ENCODE measurements at regions of chr2 and their contacts with region 1.

Region 1: GRCh38 chr2:190880378-190881073 is at the start of gene GLS:
- DNase-seq: peak; percentile 90
- ATAC-seq: peak; percentile 82
- H3K4me3 Mint-ChIP-seq: peak within 1 kb of the TSS; percentile 97
- H3K27ac Mint-ChIP-seq: peak within 1 kb of the TSS; percentile 97
- H3K4me1 Mint-ChIP-seq: peaks cover 44% of the 10 kb centered on the region
- H3K27me3 Mint-ChIP-seq: no peaks in the 10 kb centered on the region
- CTCF ChIP-seq: no peak
- total RNA-seq, gene GLS: 212 and 255 TPM in 2 replicates

Region 2: DNA sequence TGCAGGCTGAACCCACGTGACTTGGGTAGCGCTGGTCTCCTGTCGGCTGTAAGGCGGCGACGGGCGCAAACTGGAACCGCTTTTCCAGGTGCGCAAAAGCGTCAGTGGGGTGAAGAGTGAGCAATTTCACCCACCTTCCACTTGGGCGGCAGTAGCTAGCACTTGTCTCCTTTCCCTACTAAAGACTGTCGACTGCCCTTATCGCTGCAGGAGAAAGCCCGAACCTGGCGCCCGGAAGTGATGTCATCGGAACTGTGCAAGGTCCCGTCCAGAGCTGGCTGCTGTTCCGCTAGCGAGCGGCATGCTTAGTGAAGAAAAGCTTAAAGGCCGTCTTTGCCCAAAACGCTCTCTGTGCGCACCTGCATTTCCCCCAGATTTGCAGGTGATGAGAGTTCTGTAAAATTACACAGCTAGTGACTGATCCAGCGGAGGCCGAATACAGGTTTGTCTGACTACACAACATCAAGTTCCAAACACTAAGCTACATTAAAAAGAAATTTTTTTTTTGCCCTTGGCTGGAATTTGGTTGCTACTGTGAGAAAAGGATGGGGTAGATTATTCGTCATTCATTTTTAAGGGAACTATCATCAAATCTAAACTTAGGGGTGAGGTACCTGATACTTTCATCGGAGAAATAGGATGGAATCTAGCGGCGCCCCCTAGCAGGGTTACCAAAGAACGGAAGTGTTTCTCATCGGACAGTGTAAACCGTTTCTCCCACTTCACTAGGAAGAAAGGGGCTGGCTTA is 1117.8 kb before region 1 on chr2 and contains the start of gene OSGEPL1:
- CTCF ChIA-PET with region 1: no interaction called
- POLR2A ChIA-PET with region 1: interaction called, 4 read pairs
- intact Hi-C with region 1: loop called (anchors 5 kb)
- DNase-seq: peak; percentile 81
- ATAC-seq: peak; percentile 93
- H3K4me3 Mint-ChIP-seq: peak within 1 kb of the TSS; percentile 95
- H3K27ac Mint-ChIP-seq: peak within 1 kb of the TSS; percentile 97
- H3K4me1 Mint-ChIP-seq: peaks cover 8% of the 10 kb centered on the region
- H3K27me3 Mint-ChIP-seq: no peaks in the 10 kb centered on the region
- CTCF ChIP-seq: no peak
- total RNA-seq, gene OSGEPL1: 10.6 and 12.3 TPM in 2 replicates

Region 3: GRCh38 chr2:190149908-190150307 is 730.6 kb before region 1 on chr2:
- CTCF ChIA-PET with region 1: no interaction called
- POLR2A ChIA-PET with region 1: no interaction called
- intact Hi-C with region 1: no loop called
- DNase-seq: no peak
- ATAC-seq: no peak
- H3K4me3 Mint-ChIP-seq: no peak overlapping the region
- H3K27ac Mint-ChIP-seq: no peak overlapping the region
- H3K4me1 Mint-ChIP-seq: no peaks in the 10 kb centered on the region
- H3K27me3 Mint-ChIP-seq: no peaks in the 10 kb centered on the region
- CTCF ChIP-seq: no peak

Region 4: DNA sequence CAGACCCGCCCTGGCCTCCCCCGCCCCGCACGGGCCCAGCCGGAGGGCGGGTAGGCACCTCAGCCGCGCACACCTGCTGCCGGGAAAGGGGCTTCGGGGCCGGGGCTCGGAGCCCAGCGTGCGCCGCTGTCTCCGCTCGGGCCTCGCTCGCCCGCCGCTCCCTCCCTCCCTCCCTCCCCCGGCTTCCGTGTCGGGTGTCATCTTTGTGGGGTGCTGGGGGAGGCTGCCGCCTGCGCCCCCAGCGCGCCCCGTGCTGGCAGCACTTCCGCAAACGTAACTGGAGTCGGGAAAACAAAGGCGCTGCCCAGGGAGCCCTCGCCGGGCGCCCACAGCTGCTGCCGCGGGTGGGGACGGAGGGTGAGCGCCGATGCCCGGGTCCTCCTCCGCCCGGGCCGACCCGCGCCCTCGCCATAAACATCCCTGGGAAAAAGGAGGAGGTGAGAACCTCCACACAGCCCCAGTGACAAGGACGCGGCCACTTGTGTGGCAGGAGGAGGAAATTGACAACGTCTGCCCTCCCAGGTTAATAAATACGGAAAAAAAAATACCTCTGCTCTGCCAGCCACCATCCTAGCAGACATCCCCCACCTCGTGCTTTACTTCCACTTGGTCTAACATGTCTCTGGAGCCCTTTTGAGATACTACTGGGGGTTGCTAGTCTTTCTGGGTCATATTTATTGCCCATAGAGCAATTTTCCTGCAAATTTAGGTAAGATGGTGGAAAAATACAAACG is 471.8 kb before region 1 on chr2:
- CTCF ChIA-PET with region 1: no interaction called
- POLR2A ChIA-PET with region 1: interaction called, 3 read pairs
- intact Hi-C with region 1: loop called (anchors 5 kb)
- DNase-seq: no peak
- ATAC-seq: peak; percentile 55
- H3K4me3 Mint-ChIP-seq: peak overlapping the region; percentile 84
- H3K27ac Mint-ChIP-seq: peak overlapping the region; percentile 86
- H3K4me1 Mint-ChIP-seq: peaks cover 26% of the 10 kb centered on the region
- H3K27me3 Mint-ChIP-seq: no peaks in the 10 kb centered on the region
- CTCF ChIP-seq: no peak

Region 5: DNA sequence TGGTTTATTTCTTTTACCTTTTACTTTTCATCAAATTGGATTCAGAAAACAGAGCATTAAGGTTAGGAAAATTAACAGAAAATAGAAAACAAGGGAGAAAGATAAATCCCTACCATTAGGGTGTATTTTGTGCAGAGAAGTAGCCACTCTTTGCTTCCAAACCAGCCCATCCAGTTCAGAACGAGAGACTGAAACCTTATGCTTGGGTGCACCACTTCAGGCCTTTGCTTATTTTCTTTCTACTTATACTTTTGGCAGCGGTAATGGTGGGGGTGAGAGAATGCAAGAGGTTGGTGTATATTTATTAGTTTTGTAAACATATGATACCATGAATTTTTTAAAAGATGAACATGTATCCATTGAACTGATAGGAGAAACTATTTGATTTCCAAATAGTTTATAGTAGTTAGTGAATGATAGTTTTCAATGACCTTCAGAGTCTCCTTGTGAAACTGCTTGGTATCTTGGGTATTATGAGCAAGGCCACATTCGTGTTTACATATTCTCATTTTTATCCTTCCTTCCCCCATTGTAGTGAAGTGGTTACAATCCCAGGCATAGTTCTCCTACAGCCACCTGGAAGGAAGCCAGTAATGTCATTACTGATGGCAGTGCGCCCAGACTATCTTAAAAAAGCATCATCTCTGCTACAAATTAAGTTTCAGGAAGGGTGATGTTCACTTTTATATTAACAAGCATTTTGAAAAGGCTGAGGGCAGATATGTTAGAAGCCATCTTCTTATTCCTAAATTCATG is 411.5 kb before region 1 on chr2:
- CTCF ChIA-PET with region 1: no interaction called
- POLR2A ChIA-PET with region 1: no interaction called
- intact Hi-C with region 1: no loop called
- DNase-seq: no peak
- ATAC-seq: no peak
- H3K4me3 Mint-ChIP-seq: no peak overlapping the region
- H3K27ac Mint-ChIP-seq: no peak overlapping the region
- H3K4me1 Mint-ChIP-seq: peaks cover 55% of the 10 kb centered on the region
- H3K27me3 Mint-ChIP-seq: no peaks in the 10 kb centered on the region
- CTCF ChIP-seq: no peak

Region 6: DNA sequence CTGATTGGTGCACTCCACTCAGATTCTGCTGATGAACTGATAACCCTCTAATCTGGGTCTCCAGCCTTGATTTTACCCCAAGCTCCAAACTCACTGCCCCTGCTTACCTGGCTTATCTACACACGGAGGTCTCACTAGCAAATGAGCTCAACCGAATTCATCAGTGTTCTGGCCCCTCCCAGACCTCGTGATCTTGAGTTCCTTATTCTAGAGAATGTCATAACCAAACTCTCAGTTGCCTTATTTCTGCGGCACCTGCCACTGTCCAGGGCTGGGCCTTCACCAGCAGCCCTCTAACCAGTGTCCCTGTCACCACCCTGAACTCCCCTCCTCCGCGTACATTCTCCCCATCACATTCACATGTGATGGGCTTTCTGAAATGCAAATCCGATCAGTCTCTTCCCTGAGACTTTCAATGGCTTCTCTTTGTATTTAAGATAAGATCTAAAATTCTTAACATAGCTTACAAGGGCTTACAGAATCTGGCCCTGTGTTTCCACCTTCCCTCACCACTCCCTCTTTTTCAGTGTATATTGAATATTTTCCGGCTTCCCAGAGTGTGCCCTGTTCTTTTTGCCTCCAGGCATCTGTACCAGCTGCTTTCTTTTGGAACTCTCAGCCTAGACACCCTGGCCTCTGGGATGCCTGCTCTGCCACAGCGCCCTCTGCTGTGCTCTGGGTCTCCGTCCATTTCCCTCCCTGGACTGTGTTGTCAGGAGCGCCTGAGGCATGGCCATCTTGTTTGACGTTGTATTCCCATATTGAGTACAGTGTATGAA is 200.5 kb before region 1 on chr2:
- CTCF ChIA-PET with region 1: interaction called, 3 read pairs
- POLR2A ChIA-PET with region 1: interaction called, 16 read pairs
- intact Hi-C with region 1: no loop called
- DNase-seq: peak; percentile 49
- ATAC-seq: peak; percentile 76
- H3K4me3 Mint-ChIP-seq: peak overlapping the region; percentile 72
- H3K27ac Mint-ChIP-seq: peak overlapping the region; percentile 88
- H3K4me1 Mint-ChIP-seq: peaks cover 38% of the 10 kb centered on the region
- H3K27me3 Mint-ChIP-seq: no peaks in the 10 kb centered on the region
- CTCF ChIP-seq: peak; percentile 35

Region 7: GRCh38 chr2:190853531-190854383 is 26.8 kb before region 1 on chr2:
- CTCF ChIA-PET with region 1: interaction called, 23 read pairs
- POLR2A ChIA-PET with region 1: interaction called, 50 read pairs
- intact Hi-C with region 1: loop called (anchors 1 kb)
- DNase-seq: no peak
- ATAC-seq: peak; percentile 60
- H3K4me3 Mint-ChIP-seq: no peak overlapping the region
- H3K27ac Mint-ChIP-seq: peak overlapping the region; percentile 9
- H3K4me1 Mint-ChIP-seq: peaks cover 19% of the 10 kb centered on the region
- H3K27me3 Mint-ChIP-seq: no peaks in the 10 kb centered on the region
- CTCF ChIP-seq: no peak

Region 8: DNA sequence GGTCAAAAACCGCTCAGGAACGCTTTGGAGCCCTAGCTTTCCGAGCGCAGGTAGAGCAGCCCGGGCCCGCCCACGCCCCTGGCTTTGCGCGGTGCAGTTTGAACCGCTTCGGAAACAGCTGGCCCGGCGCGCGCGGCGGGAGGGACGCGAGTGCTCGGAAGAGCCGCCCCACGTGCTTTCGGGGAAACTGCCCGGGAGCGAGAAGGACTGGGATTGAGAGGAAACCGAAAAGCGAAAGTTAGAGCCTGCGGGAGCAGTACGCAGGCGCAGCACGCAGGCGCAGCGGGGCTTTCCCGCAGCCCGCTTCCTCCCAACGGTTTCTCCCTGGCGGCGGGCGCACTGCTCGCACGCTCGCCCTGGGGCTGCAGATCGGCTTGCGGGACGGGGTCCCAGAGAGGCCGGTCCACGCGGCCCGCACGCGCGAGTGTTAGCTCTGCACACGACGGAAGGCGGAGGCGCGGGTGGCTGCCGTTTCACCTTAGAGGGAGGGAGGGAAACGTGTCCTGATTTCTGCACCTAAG is 139.8 kb after region 1 on chr2:
- CTCF ChIA-PET with region 1: no interaction called
- POLR2A ChIA-PET with region 1: interaction called, 31 read pairs
- intact Hi-C with region 1: loop called (anchors 1 kb)
- DNase-seq: peak; percentile 97
- ATAC-seq: peak; percentile 83
- H3K4me3 Mint-ChIP-seq: no peak overlapping the region
- H3K27ac Mint-ChIP-seq: no peak overlapping the region
- H3K4me1 Mint-ChIP-seq: peaks cover 10% of the 10 kb centered on the region
- H3K27me3 Mint-ChIP-seq: no peaks in the 10 kb centered on the region
- CTCF ChIP-seq: no peak

Region 9: GRCh38 chr2:191144217-191144616 is 263.7 kb after region 1 on chr2:
- CTCF ChIA-PET with region 1: no interaction called
- POLR2A ChIA-PET with region 1: no interaction called
- intact Hi-C with region 1: no loop called
- DNase-seq: no peak
- ATAC-seq: no peak
- H3K4me3 Mint-ChIP-seq: no peak overlapping the region
- H3K27ac Mint-ChIP-seq: no peak overlapping the region
- H3K4me1 Mint-ChIP-seq: peaks cover 4% of the 10 kb centered on the region
- H3K27me3 Mint-ChIP-seq: peaks cover 8% of the 10 kb centered on the region
- CTCF ChIP-seq: no peak

Region 10: GRCh38 chr2:191617575-191617974 is 737.0 kb after region 1 on chr2:
- CTCF ChIA-PET with region 1: no interaction called
- POLR2A ChIA-PET with region 1: interaction called, 4 read pairs
- intact Hi-C with region 1: loop called (anchors 5 kb)
- DNase-seq: peak; percentile 19
- ATAC-seq: peak; percentile 90
- H3K4me3 Mint-ChIP-seq: peak overlapping the region; percentile 56
- H3K27ac Mint-ChIP-seq: peak overlapping the region; percentile 86
- H3K4me1 Mint-ChIP-seq: peaks cover 53% of the 10 kb centered on the region
- H3K27me3 Mint-ChIP-seq: no peaks in the 10 kb centered on the region
- CTCF ChIP-seq: no peak